ENCODE measurements at regions of chr4 and their contacts with region 1.

Region 1: DNA sequence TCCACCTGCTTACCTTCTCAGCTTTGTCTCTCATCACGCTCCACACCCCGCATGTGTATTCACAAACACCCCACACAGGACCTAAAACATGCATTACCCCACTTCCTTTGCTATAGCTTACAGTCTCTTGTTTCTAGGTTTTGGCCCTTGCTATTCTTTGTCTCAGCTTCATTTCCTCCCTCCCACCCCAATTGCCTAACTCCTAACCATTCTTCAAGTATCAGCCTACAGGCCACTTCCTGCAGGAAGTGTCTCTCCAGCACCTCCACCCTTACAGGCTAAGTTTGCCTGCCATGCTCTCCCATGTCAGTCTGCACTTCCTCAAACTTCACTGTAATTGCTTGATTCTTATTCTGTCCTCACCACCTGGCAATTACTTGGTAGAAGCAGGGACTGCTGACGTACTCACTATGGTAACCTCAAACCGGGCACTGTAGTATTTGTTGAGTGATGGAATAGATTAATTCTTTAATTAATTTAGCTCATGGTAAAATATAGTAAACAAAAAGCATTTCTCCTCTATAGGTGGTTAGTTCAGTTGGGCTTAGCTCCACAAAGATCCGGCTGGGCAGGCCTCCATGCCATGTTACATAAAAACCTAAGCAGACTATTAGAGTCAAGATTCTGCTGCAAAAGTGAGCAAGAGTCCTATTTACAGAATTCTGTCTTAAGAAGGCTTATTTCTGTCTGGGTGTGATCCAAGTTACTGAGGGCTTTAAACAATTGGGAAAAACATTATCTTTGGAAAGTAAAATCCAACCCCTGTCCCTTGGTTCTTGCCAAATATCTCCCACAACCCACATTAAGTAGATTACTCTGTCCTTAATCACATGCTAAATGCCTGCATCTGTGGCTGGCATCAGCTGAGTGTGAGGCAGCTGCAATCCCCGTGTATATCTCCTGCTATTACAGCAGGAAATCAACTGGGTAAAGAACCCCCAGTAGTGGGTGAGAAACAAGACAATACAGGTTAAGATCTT is 124.7 kb upstream of the CPEB2 start:
- DNase-seq: no peak
- H3K4me3 ChIP-seq: no peak overlapping the region
- H3K27ac ChIP-seq: no peak overlapping the region
- H3K4me1 ChIP-seq: no peaks in the 10 kb centered on the region
- H3K27me3 ChIP-seq: no peaks in the 10 kb centered on the region
- CTCF ChIP-seq: no peak

Region 2: GRCh38 chr4:14985161-14985560 is 107.6 kb after region 1 on chr4:
- intact Hi-C with region 1: loop called (anchors 5 kb)
- DNase-seq: no peak
- H3K4me3 ChIP-seq: no peak overlapping the region
- H3K27ac ChIP-seq: no peak overlapping the region
- H3K4me1 ChIP-seq: no peaks in the 10 kb centered on the region
- H3K27me3 ChIP-seq: no peaks in the 10 kb centered on the region
- CTCF ChIP-seq: no peak

Measured in colonic mucosa (tissue), 4 donors.